Natural killer cell (primary cell): ENCODE measurements at regions of chr2 and their contacts with region 1.

Region 1: DNA sequence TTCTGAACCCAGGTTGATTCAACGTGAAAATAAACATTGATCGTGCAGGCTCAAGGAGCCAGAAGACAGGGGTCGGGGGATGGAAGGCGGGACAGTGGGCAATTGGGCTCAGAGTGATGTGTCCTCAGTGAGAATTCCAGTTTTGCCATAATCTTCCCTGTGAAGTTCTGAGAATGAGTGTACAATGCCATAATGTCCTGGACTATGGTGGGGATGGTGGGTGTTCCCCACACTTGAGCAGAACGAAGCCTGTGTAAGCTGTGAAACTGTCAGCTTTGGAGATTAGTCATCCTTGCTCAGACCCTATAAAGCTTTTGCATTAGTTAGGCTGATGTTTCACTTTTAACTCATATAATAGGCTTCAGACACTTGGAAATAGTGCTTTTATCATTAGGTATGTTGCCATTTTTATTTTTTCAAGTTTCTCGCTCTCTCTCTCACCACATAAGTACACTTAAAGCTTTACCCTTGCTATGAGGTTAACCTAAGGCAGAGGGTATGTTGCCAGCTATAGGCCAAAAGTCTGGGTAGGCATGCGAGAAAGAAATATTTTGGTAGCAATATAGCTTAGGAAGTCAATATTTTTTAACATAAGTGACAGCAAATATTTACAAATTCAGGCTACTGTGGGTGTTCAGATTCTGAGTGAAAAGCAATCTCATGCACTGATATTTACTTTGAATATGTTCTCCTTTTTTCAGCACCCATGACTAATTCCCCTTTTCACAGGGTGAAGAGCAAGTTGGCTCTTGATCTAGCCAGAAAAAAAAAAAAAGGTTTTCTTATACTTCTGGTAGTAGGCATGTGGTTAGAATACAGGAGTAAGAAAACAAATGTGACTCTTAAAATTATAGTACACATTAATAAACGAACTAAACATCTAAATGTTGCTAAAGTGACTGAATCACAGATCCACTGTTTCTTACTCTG is 47.2 kb downstream of the CDC42EP3 start:
- DNase-seq: peak in 1 of 2 donors; percentile 67
- ATAC-seq: peak; percentile 83 to 90 (median 83)
- H3K4me3 ChIP-seq: no peak overlapping the region
- H3K4me3 Mint-ChIP-seq: peak overlapping the region; percentile 68
- H3K27ac ChIP-seq: peak overlapping the region; percentile 75
- H3K27ac Mint-ChIP-seq: peak overlapping the region; percentile 90 to 92
- H3K4me1 ChIP-seq: peaks cover 41% of the 10 kb centered on the region
- H3K4me1 Mint-ChIP-seq: peaks cover 67 to 68% of the 10 kb centered on the region in 2 donors
- H3K27me3 ChIP-seq: no peaks in the 10 kb centered on the region
- H3K27me3 Mint-ChIP-seq: no peaks in the 10 kb centered on the region
- CTCF ChIP-seq: no peak

Region 2: DNA sequence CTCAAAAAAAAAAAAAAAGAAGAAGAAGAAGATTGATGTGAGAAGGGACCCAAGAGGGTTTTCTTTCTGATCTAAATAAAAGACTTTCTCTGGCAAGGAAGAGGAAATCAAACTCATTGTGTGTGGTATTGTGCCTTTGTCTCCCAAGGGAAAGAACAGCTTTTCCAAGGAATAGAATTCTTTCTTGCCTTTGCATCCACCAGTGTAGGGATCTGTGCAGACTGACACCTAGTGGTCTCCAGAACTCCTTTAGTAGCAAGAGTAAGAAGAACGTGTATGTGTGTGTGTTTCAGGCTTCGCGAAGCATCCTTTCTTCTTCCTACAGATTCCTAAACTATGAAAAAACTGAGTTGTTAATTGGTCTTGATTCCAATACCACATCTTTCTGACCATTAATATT is 1302.1 kb before region 1 on chr2:
- intact Hi-C with region 1: no loop called
- DNase-seq: peak in 1 of 2 donors; percentile 20
- ATAC-seq: no peak
- H3K4me3 ChIP-seq: no peak overlapping the region
- H3K4me3 Mint-ChIP-seq: no peak overlapping the region
- H3K27ac ChIP-seq: no peak overlapping the region
- H3K27ac Mint-ChIP-seq: no peak overlapping the region
- H3K4me1 ChIP-seq: no peaks in the 10 kb centered on the region
- H3K4me1 Mint-ChIP-seq: peaks cover 8 to 11% of the 10 kb centered on the region in 2 donors
- H3K27me3 ChIP-seq: peaks cover 3% of the 10 kb centered on the region
- H3K27me3 Mint-ChIP-seq: peaks cover 3 to 8% of the 10 kb centered on the region in 2 donors
- CTCF ChIP-seq: no peak

Region 3: DNA sequence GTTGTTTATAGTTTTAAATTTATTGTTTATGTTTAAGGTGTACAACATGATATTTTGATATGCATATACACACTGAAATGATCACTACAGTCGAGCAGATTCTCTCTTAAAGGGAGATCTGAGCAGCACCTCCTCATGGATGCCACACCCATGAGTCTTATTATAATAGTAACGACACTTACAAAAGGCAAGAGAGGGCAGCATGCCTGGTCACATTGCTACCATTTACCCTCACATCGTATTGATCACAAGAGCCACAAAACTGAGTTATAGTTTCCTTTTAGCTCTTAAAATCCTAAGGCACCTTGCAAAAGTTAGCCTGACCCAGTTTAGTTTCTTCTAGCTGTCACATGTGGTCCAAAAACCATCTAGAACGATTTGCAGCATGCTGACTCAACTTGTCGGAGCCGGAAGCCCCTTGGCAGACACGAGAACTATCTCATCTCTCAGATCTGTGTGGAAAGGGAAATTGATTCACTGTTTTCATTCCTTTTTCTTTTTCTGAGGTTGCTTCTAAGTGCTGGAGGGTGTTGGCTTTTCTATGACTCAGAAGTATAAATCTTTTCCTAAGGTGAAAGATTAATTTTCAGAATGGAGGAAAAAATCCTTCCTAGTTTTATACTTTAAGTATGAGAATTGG is 38.1 kb before region 1 on chr2:
- intact Hi-C with region 1: loop called (anchors 1 kb)
- DNase-seq: peak; percentile 53 to 89
- ATAC-seq: peak; percentile 83 to 91 (median 90)
- H3K4me3 ChIP-seq: no peak overlapping the region
- H3K4me3 Mint-ChIP-seq: peak overlapping the region; percentile 82
- H3K27ac ChIP-seq: peak overlapping the region; percentile 73
- H3K27ac Mint-ChIP-seq: peak overlapping the region; percentile 82 to 86
- H3K4me1 ChIP-seq: peaks cover 40% of the 10 kb centered on the region
- H3K4me1 Mint-ChIP-seq: peaks cover 66 to 69% of the 10 kb centered on the region in 2 donors
- H3K27me3 ChIP-seq: no peaks in the 10 kb centered on the region
- H3K27me3 Mint-ChIP-seq: no peaks in the 10 kb centered on the region
- CTCF ChIP-seq: no peak

Region 4: DNA sequence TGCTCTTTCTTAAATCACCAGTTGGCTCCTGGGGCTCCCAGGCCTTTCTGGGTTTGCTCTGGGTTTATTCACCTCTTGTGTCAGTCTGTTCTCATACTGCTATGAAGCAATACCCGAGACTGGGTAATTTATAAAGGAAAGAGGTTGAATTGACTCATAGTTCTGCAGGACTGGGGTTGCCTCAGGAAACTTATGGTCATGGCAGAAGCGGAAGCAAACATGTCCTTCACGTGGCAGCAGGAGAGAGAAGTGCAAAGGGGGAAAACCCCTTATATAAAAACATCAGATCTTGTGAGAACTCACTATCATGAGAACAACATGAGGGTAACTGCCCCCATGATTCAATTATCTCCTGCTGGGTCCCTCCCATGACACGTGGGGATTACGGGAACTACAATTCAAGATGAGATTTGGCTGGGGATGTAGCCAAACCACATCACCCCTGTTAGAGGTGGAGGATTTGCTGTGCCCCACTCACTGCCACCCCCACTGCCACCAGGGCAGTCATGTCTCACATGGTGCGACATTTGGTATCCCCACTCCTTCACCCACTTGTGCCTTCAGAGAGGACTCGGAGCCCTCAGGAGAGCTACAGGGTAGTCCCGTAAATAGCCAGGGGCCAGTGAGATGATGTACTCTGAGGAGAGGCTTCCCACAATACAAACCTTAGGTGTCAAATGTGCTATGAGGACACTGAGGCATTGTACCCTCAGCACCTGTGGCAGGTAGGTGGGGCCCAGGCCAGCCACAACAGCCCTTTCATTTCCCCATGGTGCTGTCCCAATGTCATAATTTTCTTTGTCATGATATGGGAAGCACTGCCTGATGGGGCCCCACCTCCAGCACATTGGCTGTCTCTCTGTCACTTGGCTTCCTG is 11.5 kb after region 1 on chr2:
- intact Hi-C with region 1: loop called (anchors 1 kb)
- DNase-seq: peak; percentile 55 to 90
- ATAC-seq: peak; percentile 79 to 93 (median 89)
- H3K4me3 ChIP-seq: no peak overlapping the region
- H3K4me3 Mint-ChIP-seq: peak overlapping the region; percentile 74
- H3K27ac ChIP-seq: peak overlapping the region; percentile 91
- H3K27ac Mint-ChIP-seq: peak overlapping the region; percentile 91 to 96
- H3K4me1 ChIP-seq: peaks cover 38% of the 10 kb centered on the region
- H3K4me1 Mint-ChIP-seq: peaks cover 64 to 76% of the 10 kb centered on the region in 2 donors
- H3K27me3 ChIP-seq: no peaks in the 10 kb centered on the region
- H3K27me3 Mint-ChIP-seq: no peaks in the 10 kb centered on the region
- CTCF ChIP-seq: no peak

Region 5: GRCh38 chr2:37654932-37655331 is 30.7 kb after region 1 on chr2:
- intact Hi-C with region 1: loop called (anchors 5 kb)
- DNase-seq: peak in 1 of 2 donors; percentile 29
- ATAC-seq: peak in 2 of 3 donors; percentile 9 to 31
- H3K4me3 ChIP-seq: no peak overlapping the region
- H3K4me3 Mint-ChIP-seq: peak overlapping the region; percentile 74
- H3K27ac ChIP-seq: peak overlapping the region; percentile 74
- H3K27ac Mint-ChIP-seq: peak overlapping the region; percentile 91 to 96
- H3K4me1 ChIP-seq: peaks cover 70% of the 10 kb centered on the region
- H3K4me1 Mint-ChIP-seq: peaks cover 96 to 98% of the 10 kb centered on the region in 2 donors
- H3K27me3 ChIP-seq: no peaks in the 10 kb centered on the region
- H3K27me3 Mint-ChIP-seq: no peaks in the 10 kb centered on the region
- CTCF ChIP-seq: no peak